ENCODE measurements at regions of chr5 and their contacts with region 1.

Region 1: DNA sequence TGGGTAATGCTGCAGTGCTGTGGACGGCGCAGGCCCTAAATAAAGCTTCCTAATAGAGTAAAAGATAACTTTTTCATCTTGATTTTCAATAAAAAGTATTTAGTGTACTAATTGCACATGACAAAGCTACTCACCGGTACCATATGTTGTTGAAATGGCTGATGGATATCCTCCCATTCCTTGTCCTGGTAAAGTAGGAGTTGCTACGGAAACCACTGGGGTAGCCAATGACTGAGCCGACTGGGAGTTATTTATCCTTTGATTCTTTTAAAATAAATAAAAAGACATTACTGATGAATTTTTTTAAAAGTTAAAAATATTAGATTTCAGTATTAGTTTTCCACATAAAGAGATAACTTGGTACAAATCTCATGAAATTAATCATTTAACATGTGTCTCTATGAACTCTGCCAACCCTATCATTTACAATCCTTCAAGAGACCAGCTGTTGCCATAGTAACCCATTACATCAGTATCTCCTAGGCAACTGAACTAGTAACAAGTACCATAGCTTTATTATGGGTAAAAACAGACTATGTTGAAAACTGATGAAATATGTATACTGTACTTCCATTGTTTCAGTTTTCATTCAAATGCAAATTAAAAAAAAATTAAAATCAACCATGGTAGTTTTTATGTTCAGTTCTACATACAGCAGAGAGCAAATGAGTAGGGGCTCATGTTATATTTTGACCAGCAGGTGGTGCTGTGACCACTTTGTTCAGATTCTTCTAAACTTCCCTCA is 153.7 kb downstream of the MEF2C start:
- DNase-seq: peak; percentile 86
- H3K4me3 ChIP-seq: no peak overlapping the region
- H3K27ac ChIP-seq: no peak overlapping the region
- H3K4me1 ChIP-seq: peaks cover 6% of the 10 kb centered on the region
- H3K27me3 ChIP-seq: no peaks in the 10 kb centered on the region
- CTCF ChIP-seq: peak; percentile 49 to 50
- POLR2A ChIP-seq: no peak

Region 2: GRCh38 chr5:88826646-88827585 is 97.7 kb after region 1 on chr5:
- CTCF ChIA-PET with region 1: interaction called, 37 read pairs
- POLR2A ChIA-PET with region 1: no interaction called
- dilution Hi-C with region 1: no loop called
- intact Hi-C with region 1: loop called (anchors 1 kb)
- DNase-seq: peak; percentile 99
- H3K4me3 ChIP-seq: peak overlapping the region in 1 of 3 experiments; percentile 37
- H3K27ac ChIP-seq: peak overlapping the region; percentile 94
- H3K4me1 ChIP-seq: peaks cover 64% of the 10 kb centered on the region
- H3K27me3 ChIP-seq: no peaks in the 10 kb centered on the region
- CTCF ChIP-seq: no peak
- POLR2A ChIP-seq: peak; percentile 73

Region 3: GRCh38 chr5:88883059-88883835 is 154.0 kb after region 1 on chr5 and contains the start of gene MEF2C:
- CTCF ChIA-PET with region 1: interaction called, 164 read pairs
- POLR2A ChIA-PET with region 1: interaction called, 7 read pairs
- dilution Hi-C with region 1: no loop called
- intact Hi-C with region 1: loop called (anchors 1 kb)
- DNase-seq: peak; percentile 96
- H3K4me3 ChIP-seq: peak within 1 kb of the TSS; percentile 79 to 100 (median 100)
- H3K27ac ChIP-seq: peak within 1 kb of the TSS; percentile 95
- H3K4me1 ChIP-seq: peaks cover 31% of the 10 kb centered on the region
- H3K27me3 ChIP-seq: no peaks in the 10 kb centered on the region
- CTCF ChIP-seq: no peak
- POLR2A ChIP-seq: peak; percentile 70
- total RNA-seq, gene MEF2C: 58.3 and 67.7 TPM in 2 replicates

Region 4: GRCh38 chr5:89120719-89121118 is 391.5 kb after region 1 on chr5:
- CTCF ChIA-PET with region 1: interaction called, 3 read pairs
- POLR2A ChIA-PET with region 1: no interaction called
- dilution Hi-C with region 1: no loop called
- intact Hi-C with region 1: loop called (anchors 10 kb)
- DNase-seq: no peak
- H3K4me3 ChIP-seq: no peak overlapping the region
- H3K27ac ChIP-seq: no peak overlapping the region
- H3K4me1 ChIP-seq: no peaks in the 10 kb centered on the region
- H3K27me3 ChIP-seq: no peaks in the 10 kb centered on the region
- CTCF ChIP-seq: no peak
- POLR2A ChIP-seq: no peak

Region 5: DNA sequence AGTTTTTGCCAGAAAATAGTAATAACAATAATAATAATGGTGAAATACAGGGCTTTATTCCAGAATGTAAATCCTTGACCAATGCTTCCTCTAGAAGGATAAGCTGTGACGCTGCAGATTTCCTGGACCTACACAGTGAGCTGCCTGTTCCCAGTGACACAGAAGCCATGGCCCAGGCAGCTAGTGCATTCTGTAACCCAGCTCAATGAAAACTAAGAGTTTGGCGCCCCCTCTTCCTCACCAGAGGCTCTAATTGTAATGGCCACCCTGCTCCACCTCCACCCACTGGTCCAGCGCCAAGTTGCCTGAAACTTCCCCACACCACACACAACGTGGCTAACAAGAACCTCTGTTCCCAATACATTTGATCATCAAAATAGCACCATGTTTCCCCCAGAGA is 1432.2 kb after region 1 on chr5:
- CTCF ChIA-PET with region 1: interaction called, 126 read pairs
- POLR2A ChIA-PET with region 1: no interaction called
- dilution Hi-C with region 1: no loop called
- intact Hi-C with region 1: loop called (anchors 1 kb)
- DNase-seq: peak; percentile 76
- H3K4me3 ChIP-seq: no peak overlapping the region
- H3K27ac ChIP-seq: no peak overlapping the region
- H3K4me1 ChIP-seq: no peaks in the 10 kb centered on the region
- H3K27me3 ChIP-seq: no peaks in the 10 kb centered on the region
- CTCF ChIP-seq: peak; percentile 40 to 58
- POLR2A ChIP-seq: no peak